Esophagus muscularis mucosa (tissue), 4 donors: ENCODE measurements at regions of chr14 and their contacts with region 1.

Region 1: GRCh38 chr14:75501080-75501479 is 21.2 kb upstream of the BATF start:
- DNase-seq: peak; percentile 57
- H3K4me3 ChIP-seq: no peak overlapping the region
- H3K27ac ChIP-seq: no peak overlapping the region
- H3K4me1 ChIP-seq: no peaks in the 10 kb centered on the region
- H3K27me3 ChIP-seq: no peaks in the 10 kb centered on the region
- CTCF ChIP-seq: no peak
- EP300 ChIP-seq: no peak
- POLR2A ChIP-seq: no peak

Region 2: GRCh38 chr14:75323571-75323970 is 177.5 kb before region 1 on chr14:
- intact Hi-C with region 1: loop called (anchors 5 kb)
- DNase-seq: no peak
- H3K4me3 ChIP-seq: no peak overlapping the region
- H3K27ac ChIP-seq: no peak overlapping the region
- H3K4me1 ChIP-seq: no peaks in the 10 kb centered on the region
- H3K27me3 ChIP-seq: no peaks in the 10 kb centered on the region
- CTCF ChIP-seq: no peak
- EP300 ChIP-seq: no peak
- POLR2A ChIP-seq: no peak